ENCODE measurements at regions of chr12 and their contacts with region 1.

Region 1: DNA sequence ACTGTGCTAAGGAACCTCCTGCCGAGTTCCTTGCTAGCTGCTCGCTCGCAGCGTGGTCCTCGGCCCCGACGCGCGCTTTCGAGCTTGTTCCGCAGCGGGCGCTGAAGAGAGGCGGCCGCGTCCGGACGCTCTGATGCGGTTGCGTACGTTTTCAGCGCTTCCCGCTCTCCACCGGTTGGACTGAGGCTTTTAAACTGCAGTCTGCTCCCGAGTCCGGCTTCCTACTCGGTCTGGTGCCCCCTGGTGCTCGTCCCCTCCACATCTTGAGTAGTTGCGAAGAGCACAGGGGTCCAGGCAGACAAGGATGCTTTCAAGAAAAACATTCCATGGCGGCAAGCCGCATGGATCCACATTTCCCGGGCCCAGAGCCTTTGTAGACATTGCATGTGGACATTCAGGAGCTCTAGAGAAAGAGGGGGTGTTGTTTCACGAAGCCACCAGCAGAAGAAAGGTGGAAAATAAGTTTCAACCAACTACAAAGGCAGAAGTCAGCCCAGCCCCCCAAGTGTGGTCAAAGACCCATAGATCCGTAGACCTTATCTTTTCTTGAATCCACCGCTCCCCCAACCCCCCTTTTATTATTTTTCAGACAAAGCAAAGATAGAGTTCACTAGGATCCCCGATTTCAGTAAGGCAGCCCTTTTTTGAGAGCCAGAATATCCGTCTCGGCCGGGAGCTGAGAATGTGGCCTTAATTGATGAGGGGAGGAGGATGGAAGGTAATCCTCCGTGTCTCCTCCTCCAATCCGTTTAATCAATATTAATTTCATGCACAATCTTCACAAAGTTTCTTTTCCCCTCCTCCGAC is 984 bp upstream of the WNK1 start:
- DNase-seq: peak; percentile 97
- ATAC-seq: peak; percentile 61
- H3K4me3 Mint-ChIP-seq: no peak overlapping the region
- H3K27ac Mint-ChIP-seq: no peak overlapping the region
- H3K4me1 Mint-ChIP-seq: peaks cover 18% of the 10 kb centered on the region
- H3K27me3 Mint-ChIP-seq: no peaks in the 10 kb centered on the region

Region 2: GRCh38 chr12:614411-614970 is 136.9 kb before region 1 on chr12:
- CTCF ChIA-PET with region 1: interaction called, 83 read pairs
- DNase-seq: peak; percentile 54
- ATAC-seq: no peak
- H3K4me3 Mint-ChIP-seq: no peak overlapping the region
- H3K27ac Mint-ChIP-seq: peak overlapping the region; percentile 12
- H3K4me1 Mint-ChIP-seq: peaks cover 42% of the 10 kb centered on the region
- H3K27me3 Mint-ChIP-seq: no peaks in the 10 kb centered on the region

Region 3: DNA sequence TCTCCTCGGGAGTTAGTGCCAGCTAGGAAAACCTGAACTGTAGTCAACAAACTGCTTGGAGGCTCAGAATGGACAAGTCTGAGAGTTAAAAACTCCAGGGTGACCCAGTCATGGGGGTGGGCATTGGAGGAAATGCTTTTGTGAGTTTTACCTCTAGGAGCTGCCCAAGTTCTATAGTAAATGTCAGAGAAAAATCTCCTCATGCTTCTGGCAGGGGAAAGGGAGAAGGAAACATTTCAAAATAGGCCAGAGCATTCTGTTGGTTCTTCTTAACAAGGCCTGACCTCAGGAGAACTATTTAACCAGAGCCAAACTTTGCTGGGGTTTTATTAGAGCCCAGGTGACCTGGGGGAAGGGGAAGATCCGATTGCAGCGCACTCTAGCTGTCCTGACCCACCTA is 100.4 kb before region 1 on chr12:
- CTCF ChIA-PET with region 1: interaction called, 44 read pairs
- DNase-seq: no peak
- ATAC-seq: no peak
- H3K4me3 Mint-ChIP-seq: no peak overlapping the region
- H3K27ac Mint-ChIP-seq: no peak overlapping the region
- H3K4me1 Mint-ChIP-seq: no peaks in the 10 kb centered on the region
- H3K27me3 Mint-ChIP-seq: no peaks in the 10 kb centered on the region

Region 4: GRCh38 chr12:685388-685787 is 66.0 kb before region 1 on chr12:
- CTCF ChIA-PET with region 1: interaction called, 26 read pairs
- DNase-seq: peak; percentile 95
- ATAC-seq: peak; percentile 92
- H3K4me3 Mint-ChIP-seq: peak overlapping the region; percentile 29
- H3K27ac Mint-ChIP-seq: peak overlapping the region; percentile 93
- H3K4me1 Mint-ChIP-seq: peaks cover 39% of the 10 kb centered on the region
- H3K27me3 Mint-ChIP-seq: no peaks in the 10 kb centered on the region

Region 5: DNA sequence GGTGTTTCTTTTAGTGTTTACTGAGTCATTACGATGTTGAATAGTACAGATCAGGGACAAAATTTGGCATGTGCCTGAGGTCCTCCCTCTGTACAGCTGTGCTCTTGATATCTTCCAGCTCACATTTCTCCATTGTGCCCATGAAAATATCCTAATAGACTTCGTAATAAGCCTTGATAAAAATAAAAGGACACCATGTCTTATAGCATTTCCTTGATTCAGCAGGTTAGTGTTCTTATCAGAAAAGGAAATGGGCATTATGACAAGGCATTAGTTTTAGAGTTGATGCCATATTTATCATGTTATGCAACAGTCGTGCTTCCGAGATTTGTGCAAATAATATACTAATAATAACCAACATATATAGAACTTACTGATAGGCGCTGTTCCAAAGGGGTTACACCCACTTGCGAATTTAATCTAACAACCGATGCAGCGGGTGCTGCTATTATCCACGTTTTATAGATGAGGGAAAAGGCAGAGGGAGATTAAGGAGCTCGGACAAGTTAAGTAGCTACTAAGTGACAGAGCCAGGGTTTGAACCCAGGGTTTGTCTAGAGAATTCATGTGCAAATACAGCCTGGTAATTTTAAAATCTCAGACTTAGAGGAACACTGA is 14.2 kb before region 1 on chr12:
- CTCF ChIA-PET with region 1: interaction called, 22 read pairs
- DNase-seq: no peak
- ATAC-seq: no peak
- H3K4me3 Mint-ChIP-seq: no peak overlapping the region
- H3K27ac Mint-ChIP-seq: no peak overlapping the region
- H3K4me1 Mint-ChIP-seq: peaks cover 10% of the 10 kb centered on the region
- H3K27me3 Mint-ChIP-seq: no peaks in the 10 kb centered on the region

Measured in activated CD8-positive, alpha-beta memory T cell treated with anti-CD3 and anti-CD28 coated beads, Interleukin-2, amount 10 ng/mL, durations not matched to agents 7 days and 5 days (primary cell).